ENCODE measurements at regions of chr1 and their contacts with region 1.

Region 1: GRCh38 chr1:96445302-96445701 is 276.3 kb upstream of the PTBP2 start:
- DNase-seq: no peak
- H3K4me3 Mint-ChIP-seq: no peak overlapping the region
- H3K27ac Mint-ChIP-seq: no peak overlapping the region
- H3K4me1 Mint-ChIP-seq: no peaks in the 10 kb centered on the region
- H3K27me3 Mint-ChIP-seq: no peaks in the 10 kb centered on the region
- CTCF ChIP-seq: no peak

Region 2: DNA sequence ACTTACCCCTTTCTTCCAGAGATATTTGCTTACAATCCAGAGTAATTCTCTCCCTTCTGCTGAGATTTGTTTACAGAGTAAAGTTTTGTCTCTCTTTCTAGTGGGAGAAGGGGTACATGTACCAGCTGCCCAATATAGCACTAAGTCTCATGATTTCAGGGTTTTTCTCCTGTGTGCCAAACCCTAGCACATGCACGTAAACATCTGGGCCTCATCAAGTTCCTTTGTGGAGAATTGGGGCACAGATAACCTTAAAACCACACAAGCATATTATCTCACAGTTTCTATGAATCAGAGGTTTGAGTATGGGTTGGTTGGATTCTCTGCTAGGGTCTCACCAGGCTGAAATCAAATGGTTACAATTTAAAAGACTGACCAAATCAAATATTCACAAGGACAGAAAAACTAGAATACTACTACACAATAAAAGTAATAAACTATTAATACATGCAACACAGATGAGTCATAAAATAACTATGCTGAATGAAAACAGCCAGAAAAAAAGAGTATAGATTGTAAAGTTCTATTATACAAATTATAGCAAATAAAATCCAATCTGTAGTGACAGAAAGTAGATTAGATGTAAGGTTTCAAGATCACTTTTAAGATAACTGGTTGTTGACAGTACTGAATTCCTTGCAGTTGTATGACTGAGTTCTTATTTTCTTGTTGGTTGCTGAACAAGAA is 71.1 kb before region 1 on chr1:
- CTCF ChIA-PET with region 1: no interaction called
- intact Hi-C with region 1: no loop called
- DNase-seq: no peak
- H3K4me3 Mint-ChIP-seq: no peak overlapping the region
- H3K27ac Mint-ChIP-seq: no peak overlapping the region
- H3K4me1 Mint-ChIP-seq: no peaks in the 10 kb centered on the region
- H3K27me3 Mint-ChIP-seq: no peaks in the 10 kb centered on the region
- CTCF ChIP-seq: no peak

Region 3: DNA sequence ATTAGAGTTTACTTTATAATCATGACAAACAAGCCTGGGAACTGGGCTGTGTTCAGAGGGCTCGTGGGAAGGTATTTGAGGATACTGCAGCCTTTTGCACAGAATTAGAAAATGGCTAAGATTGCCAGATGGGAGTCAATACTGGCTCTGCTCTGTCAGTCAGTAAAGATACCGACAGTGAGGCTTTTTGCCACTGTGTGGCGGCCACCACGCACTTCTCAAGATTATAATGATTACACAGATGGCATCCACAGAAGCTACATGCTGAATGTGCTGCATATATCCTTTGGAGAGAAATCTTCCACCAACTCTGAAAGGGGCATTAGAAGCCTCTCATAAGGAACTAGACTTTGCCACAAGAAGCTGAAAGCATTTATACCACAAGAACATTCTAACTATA is 62.9 kb after region 1 on chr1:
- CTCF ChIA-PET with region 1: no interaction called
- intact Hi-C with region 1: loop called (anchors 10 kb)
- DNase-seq: no peak
- H3K4me3 Mint-ChIP-seq: no peak overlapping the region
- H3K27ac Mint-ChIP-seq: no peak overlapping the region
- H3K4me1 Mint-ChIP-seq: peaks cover 15% of the 10 kb centered on the region
- H3K27me3 Mint-ChIP-seq: no peaks in the 10 kb centered on the region
- CTCF ChIP-seq: no peak

Measured in Calu3 (cell line).